ENCODE measurements at regions of chr13 and their contacts with region 1.

Region 1: GRCh38 chr13:37074703-37075102 is 15.2 kb upstream of the SUPT20H start:
- DNase-seq: no peak
- H3K4me3 Mint-ChIP-seq: no peak overlapping the region
- H3K27ac Mint-ChIP-seq: no peak overlapping the region
- H3K4me1 Mint-ChIP-seq: no peaks in the 10 kb centered on the region
- H3K27me3 Mint-ChIP-seq: no peaks in the 10 kb centered on the region
- CTCF ChIP-seq: no peak

Region 2: GRCh38 chr13:36418022-36418805 is 656.5 kb before region 1 on chr13:
- CTCF ChIA-PET with region 1: no interaction called
- intact Hi-C with region 1: no loop called
- DNase-seq: peak; percentile 17
- H3K4me3 Mint-ChIP-seq: peak overlapping the region; percentile 36
- H3K27ac Mint-ChIP-seq: peak overlapping the region; percentile 51
- H3K4me1 Mint-ChIP-seq: peaks cover 28% of the 10 kb centered on the region
- H3K27me3 Mint-ChIP-seq: no peaks in the 10 kb centered on the region
- CTCF ChIP-seq: no peak

Region 3: DNA sequence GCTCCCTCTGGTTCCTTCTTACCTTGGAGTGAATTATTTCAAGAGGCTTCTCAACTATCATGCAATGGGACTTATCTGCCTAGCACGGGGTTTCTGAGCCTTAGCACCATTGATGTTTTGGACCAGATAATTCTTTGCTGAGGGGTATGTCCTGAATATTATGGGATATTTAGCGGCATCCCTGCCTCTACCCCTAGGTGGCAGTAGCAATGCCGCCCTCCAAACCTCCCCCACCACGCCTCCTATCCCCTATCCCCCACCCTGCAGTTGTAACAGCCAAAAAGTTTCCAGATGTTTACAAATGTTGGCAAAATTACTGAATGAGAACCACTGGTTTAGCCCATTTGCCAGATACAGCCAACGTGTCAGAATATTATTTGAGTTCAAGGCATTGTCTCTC is 398.3 kb after region 1 on chr13:
- CTCF ChIA-PET with region 1: no interaction called
- intact Hi-C with region 1: no loop called
- DNase-seq: no peak
- H3K4me3 Mint-ChIP-seq: no peak overlapping the region
- H3K27ac Mint-ChIP-seq: no peak overlapping the region
- H3K4me1 Mint-ChIP-seq: no peaks in the 10 kb centered on the region
- H3K27me3 Mint-ChIP-seq: no peaks in the 10 kb centered on the region
- CTCF ChIP-seq: no peak

Region 4: GRCh38 chr13:37602747-37603381 is 528.2 kb after region 1 on chr13:
- CTCF ChIA-PET with region 1: no interaction called
- intact Hi-C with region 1: loop called (anchors 2 kb)
- DNase-seq: no peak
- H3K4me3 Mint-ChIP-seq: no peak overlapping the region
- H3K27ac Mint-ChIP-seq: no peak overlapping the region
- H3K4me1 Mint-ChIP-seq: no peaks in the 10 kb centered on the region
- H3K27me3 Mint-ChIP-seq: no peaks in the 10 kb centered on the region
- CTCF ChIP-seq: peak; percentile 12

Measured in Calu3 (cell line).